Activated T-helper 1 cell treated with anti-CD3 and anti-CD28 coated beads, Interleukin-12 subunit alpha, Interleukin-12 subunit beta, Interleukin-2, Interleukin-4 antibody, amounts not matched to agents 30 ng/mL and 10 ng/mL and 1 ng/mL, durations not matched to agents 14 hours and 24 hours and 36 hours (primary cell): ENCODE measurements at regions of chr20 and their contacts with region 1.

Region 1: GRCh38 chr20:17995967-17996819 is 27.4 kb downstream of the MGME1 start:
- DNase-seq: peak; percentile 46
- H3K4me3 Mint-ChIP-seq: no peak overlapping the region
- H3K27ac Mint-ChIP-seq: no peak overlapping the region
- H3K4me1 Mint-ChIP-seq: peaks cover 43% of the 10 kb centered on the region
- H3K27me3 Mint-ChIP-seq: peaks cover 3% of the 10 kb centered on the region

Region 2: DNA sequence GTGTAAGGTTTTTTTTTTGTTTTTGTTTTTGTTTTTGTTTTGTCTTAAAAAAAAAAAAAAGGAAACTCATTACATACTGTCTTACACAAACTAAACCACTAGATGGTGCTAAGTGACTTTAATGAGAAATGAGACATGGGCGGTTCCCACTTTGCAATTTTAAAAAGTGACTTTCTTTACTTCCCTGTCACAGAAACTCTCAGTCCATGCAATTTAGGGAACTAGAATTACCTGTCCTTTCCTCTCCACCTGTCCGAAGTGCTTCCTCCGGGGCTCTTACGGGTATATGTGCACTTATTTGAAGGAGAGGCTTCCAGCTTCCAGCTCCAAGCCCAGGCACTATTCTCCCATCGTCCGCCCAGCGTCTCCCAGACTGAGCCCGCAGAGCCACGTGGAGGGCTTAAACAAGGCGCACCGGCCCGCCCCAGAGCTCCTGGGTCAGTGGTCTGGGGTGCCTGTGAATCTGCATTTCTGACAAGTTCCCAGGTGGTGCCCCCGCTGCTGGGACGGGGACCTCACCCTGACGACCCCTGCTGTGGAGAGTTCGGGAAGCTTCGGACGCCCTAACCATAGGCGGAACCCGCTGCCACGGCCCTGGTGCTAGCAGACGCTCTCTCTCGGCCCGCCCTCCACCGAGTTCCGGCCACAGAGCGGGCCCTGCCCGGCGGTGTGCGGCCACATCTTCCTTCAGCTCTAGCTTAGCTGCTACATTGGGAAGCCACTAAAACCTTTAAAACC is 491.1 kb before region 1 on chr20:
- intact Hi-C with region 1: loop called (anchors 1 kb)
- DNase-seq: peak; percentile 71
- H3K4me3 Mint-ChIP-seq: peak overlapping the region; percentile 81
- H3K27ac Mint-ChIP-seq: peak overlapping the region; percentile 86
- H3K4me1 Mint-ChIP-seq: peaks cover 71% of the 10 kb centered on the region
- H3K27me3 Mint-ChIP-seq: peaks cover 4% of the 10 kb centered on the region

Region 3: DNA sequence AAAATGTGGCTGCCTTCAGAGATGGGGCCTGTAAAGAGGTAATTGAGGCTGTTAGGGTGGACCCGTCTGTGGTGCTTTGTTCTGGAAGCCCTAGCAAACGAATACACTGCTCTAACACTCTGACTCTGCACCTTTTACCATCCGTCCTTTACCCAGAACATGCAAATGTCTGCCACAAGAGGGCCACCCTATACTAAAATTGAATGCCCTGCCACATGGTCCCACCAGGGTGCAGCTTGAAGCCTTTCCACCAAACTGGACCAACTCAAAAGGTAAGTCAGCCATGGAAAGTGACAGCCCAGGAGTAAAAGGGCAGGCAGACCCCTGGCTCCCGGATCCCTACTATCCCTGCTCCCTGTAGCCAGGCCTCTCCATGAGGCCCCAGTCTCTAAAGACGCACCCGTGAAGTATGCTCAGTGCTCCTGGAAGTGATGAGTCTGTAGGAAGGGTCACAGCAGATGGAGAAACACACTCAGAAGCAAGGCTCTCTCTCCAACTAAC is 459.2 kb before region 1 on chr20:
- intact Hi-C with region 1: loop called (anchors 1 kb)
- DNase-seq: peak; percentile 63
- H3K4me3 Mint-ChIP-seq: no peak overlapping the region
- H3K27ac Mint-ChIP-seq: no peak overlapping the region
- H3K4me1 Mint-ChIP-seq: peaks cover 40% of the 10 kb centered on the region
- H3K27me3 Mint-ChIP-seq: peaks cover 24% of the 10 kb centered on the region

Region 4: DNA sequence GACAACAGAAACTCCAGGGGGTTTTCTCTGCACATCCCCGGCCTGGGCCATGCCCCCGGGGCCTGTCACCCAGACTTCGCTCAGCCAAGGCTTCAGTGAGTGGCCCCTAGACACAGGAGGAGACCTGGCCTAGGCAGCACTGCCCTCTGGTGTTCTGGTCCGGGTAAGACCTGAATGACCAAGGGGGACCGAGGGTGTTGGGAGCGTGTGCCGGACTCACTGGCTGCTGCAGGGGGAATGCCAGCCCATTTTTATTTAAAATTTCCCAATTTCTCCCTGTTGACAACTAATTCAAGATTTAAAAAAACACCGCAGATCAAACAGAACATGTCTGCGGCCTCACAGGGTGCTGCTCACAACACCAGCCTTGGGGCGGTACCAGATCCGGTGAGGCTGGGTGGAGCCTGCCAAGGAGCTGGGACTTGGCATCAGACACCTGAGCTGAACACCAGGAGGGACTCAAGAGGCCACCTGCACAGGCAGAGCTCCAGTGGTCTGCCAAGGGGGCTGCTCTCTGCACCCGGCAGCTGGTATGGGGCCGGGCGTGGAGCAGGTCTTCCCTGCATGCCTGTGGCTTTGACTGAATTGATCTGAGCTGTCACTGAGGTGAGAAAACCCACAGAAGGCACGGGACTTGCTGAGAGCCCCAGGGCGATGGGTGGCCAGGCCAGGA is 378.5 kb before region 1 on chr20:
- intact Hi-C with region 1: loop called (anchors 2 kb)
- DNase-seq: no peak
- H3K4me3 Mint-ChIP-seq: no peak overlapping the region
- H3K27ac Mint-ChIP-seq: no peak overlapping the region
- H3K4me1 Mint-ChIP-seq: peaks cover under 1% of the 10 kb centered on the region
- H3K27me3 Mint-ChIP-seq: no peaks in the 10 kb centered on the region

Region 5: DNA sequence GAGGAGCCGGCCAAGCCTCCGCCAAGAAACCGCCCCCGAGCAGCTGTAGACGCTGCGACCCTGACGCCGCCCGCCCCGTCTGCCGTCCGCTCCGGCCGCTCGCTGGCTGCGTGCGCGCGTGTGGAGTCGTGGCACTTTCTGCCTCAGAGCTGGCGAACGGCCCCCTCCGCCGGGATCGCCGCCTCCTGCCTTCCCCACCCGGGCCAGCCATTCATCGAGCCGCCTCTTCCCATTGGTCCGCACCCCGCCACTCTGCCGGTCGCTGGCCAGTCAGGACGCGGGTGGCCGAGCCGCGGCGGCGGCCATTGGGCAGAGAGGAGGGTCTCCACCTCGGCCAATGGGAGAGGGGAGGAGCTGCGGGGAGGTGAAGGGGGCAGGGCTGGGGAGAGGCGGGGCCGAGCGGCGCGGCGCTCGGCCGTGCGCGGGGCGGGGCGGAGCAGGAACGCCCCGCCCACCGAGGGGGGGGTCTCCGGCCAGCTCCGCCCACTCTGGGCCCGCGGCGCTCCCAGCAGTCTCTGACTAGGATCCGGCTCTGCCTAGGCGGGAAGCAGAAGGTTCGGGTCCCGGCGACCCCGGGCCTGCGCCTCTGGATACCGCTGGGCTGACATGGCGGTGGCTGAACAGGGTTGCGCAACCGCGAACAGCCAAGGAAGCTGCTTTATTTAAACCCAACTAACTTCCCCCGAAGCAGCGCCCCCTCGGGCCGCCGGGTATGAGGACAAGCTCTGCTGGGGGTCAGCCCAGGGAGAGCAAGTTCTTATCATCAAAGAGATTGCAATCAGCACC is 313.9 kb before region 1 on chr20 and contains the start of gene RRBP1:
- intact Hi-C with region 1: loop called (anchors 1 kb)
- DNase-seq: peak; percentile 97
- H3K4me3 Mint-ChIP-seq: peak within 1 kb of the TSS; percentile 88
- H3K27ac Mint-ChIP-seq: peak within 1 kb of the TSS; percentile 91
- H3K4me1 Mint-ChIP-seq: peaks cover 24% of the 10 kb centered on the region
- H3K27me3 Mint-ChIP-seq: peaks cover 26% of the 10 kb centered on the region
- total RNA-seq, gene RRBP1: 54.8 and 56.0 TPM in 2 replicates

Region 6: DNA sequence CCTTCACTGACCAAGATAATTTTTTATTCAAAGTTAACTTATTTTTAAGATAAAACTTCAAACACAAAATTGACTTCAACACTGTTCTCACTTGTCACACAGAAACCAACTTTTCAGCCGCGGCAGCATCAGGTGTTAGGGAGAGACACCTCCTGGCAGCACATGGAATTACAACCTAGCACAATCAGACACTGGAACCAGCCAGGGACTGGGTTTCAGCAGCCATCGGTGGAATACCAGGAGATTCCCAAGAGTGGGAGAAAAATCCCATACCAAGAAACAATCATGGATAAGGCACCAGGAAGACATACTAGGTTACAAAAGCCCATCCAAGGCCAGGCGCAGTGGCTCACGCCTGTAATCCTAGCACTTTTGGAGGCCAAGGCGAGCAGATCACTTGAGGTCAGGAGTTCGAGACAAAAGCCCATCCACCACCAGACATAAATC is 97.6 kb before region 1 on chr20:
- intact Hi-C with region 1: loop called (anchors 1 kb)
- DNase-seq: peak; percentile 44
- H3K4me3 Mint-ChIP-seq: no peak overlapping the region
- H3K27ac Mint-ChIP-seq: no peak overlapping the region
- H3K4me1 Mint-ChIP-seq: peaks cover 37% of the 10 kb centered on the region
- H3K27me3 Mint-ChIP-seq: peaks cover 17% of the 10 kb centered on the region

Region 7: GRCh38 chr20:17925141-17925939 is 70.9 kb before region 1 on chr20:
- intact Hi-C with region 1: no loop called
- DNase-seq: no peak
- H3K4me3 Mint-ChIP-seq: no peak overlapping the region
- H3K27ac Mint-ChIP-seq: no peak overlapping the region
- H3K4me1 Mint-ChIP-seq: no peaks in the 10 kb centered on the region
- H3K27me3 Mint-ChIP-seq: peaks cover 13% of the 10 kb centered on the region

Region 8: GRCh38 chr20:17958373-17959256 is 37.6 kb before region 1 on chr20:
- intact Hi-C with region 1: loop called (anchors 1 kb)
- DNase-seq: no peak
- H3K4me3 Mint-ChIP-seq: peak overlapping the region; percentile 13
- H3K27ac Mint-ChIP-seq: peak overlapping the region; percentile 1
- H3K4me1 Mint-ChIP-seq: peaks cover 82% of the 10 kb centered on the region
- H3K27me3 Mint-ChIP-seq: no peaks in the 10 kb centered on the region